A673 (cell line): ENCODE measurements at regions of chr20 and their contacts with region 1.

Region 1: DNA sequence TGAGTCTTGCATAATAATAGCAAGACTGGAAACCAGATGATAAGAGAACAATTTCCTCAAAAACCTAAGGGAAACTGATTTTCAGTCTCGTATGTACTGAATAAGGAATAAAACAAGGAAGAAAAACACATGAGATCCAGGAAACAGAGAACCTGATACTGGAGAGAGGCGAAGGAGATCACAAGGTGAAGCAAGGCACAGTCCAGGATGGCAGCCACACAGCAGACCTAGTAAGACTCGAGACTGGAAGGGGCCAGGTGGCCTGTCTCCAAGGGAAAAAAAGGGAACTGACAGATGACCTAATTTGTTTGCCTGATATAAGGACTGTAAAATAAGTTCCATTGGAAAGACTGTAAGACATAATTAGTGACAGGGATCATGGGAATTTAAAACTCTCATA is 71.1 kb downstream of the TASP1 start:
- DNase-seq: no peak
- H3K4me3 ChIP-seq: no peak overlapping the region
- H3K27ac ChIP-seq: no peak overlapping the region
- H3K4me1 ChIP-seq: no peaks in the 10 kb centered on the region
- H3K27me3 ChIP-seq: no peaks in the 10 kb centered on the region
- CTCF ChIP-seq: no peak

Region 2: DNA sequence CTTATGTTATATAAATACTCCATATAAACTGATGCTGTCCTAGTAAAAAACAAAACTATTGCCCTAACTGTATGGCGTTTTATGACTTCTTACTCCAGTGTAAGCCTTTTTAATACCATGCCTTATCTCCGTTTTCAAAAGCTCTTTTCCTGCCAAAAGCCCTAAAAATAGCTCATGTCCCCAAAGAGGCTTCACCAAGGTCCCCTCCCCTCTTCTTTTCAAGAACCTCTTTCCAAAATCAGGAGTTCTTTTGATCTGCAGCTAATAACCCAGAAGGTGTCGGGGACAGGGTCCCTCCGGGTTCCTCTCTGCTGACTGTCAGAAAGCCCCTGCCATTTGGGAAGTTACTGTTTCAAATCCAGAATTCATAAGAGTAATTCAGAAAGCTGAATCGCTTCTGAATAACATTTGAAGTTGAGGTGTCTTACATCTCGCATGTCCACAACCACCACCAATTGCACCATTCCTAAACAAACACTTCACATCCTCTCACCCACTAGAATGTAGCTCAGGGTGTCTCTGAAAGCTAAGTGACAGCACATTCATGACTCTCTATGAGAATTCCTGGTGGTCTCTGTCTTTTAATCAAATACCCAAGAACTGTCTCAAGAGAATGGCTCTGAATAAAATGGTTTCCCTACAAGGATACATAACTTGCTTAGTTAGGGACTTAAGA is 57.8 kb after region 1 on chr20:
- CTCF ChIA-PET with region 1: no interaction called
- POLR2A ChIA-PET with region 1: interaction called, 12 read pairs
- intact Hi-C with region 1: no loop called
- DNase-seq: no peak
- H3K4me3 ChIP-seq: no peak overlapping the region
- H3K27ac ChIP-seq: peak overlapping the region; percentile 33
- H3K4me1 ChIP-seq: peaks cover 12% of the 10 kb centered on the region
- H3K27me3 ChIP-seq: no peaks in the 10 kb centered on the region
- CTCF ChIP-seq: no peak